ENCODE measurements at regions of chr6 and their contacts with region 1.

Region 1: DNA sequence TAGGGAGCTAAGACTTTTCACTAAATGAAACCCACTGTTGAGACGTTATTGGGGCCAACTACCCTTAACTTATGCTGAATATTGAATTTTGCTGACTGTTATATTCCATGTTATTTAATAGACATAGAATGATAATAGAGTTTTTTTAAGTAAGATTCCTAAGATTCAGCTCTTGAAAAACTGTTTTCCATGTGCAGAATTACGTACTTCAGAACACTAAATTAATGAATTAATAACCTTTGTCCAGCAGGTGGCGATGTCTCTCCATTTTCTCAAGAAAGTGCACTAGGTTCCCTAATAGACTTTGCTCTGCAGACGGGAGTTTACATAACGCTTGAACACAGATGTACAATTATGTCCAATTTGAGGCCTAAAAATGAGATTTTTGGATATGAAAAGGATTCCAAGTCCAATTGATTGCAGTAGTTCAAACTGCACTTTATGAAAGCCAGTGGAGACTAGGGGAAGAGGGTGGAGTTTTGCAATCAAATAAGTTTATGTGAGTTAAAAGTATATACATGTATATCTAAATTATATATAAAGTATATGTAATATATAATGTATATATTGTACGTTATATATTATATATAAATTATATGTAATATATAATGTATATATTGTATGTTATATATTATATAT is 282.1 kb downstream of the UST start:
- DNase-seq: peak; percentile 55
- H3K4me3 Mint-ChIP-seq: no peak overlapping the region
- H3K27ac Mint-ChIP-seq: peak overlapping the region; percentile 75
- H3K4me1 Mint-ChIP-seq: peaks cover 44% of the 10 kb centered on the region
- H3K27me3 Mint-ChIP-seq: no peaks in the 10 kb centered on the region

Region 2: DNA sequence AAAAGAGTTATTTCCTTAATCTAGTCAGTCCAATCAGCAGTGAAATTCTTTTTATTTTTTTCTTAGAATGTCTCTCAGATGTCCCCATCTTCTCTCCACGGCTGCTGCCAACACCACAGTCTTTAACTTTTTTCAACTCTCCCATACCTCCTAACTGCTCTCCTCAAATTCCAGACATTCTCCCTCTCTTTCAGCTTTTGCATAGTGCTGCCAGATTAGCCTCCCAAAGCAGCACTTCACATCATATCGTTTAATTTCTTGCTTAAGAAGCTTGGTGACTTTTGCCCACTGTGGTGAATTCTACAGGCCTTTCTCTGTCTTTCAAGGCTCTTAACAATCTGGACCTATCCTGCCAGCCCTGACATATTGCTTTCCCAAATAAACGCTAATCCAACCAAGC is 48.7 kb before region 1 on chr6:
- intact Hi-C with region 1: no loop called
- DNase-seq: no peak
- H3K4me3 Mint-ChIP-seq: no peak overlapping the region
- H3K27ac Mint-ChIP-seq: no peak overlapping the region
- H3K4me1 Mint-ChIP-seq: no peaks in the 10 kb centered on the region
- H3K27me3 Mint-ChIP-seq: peaks cover 28% of the 10 kb centered on the region

Region 3: DNA sequence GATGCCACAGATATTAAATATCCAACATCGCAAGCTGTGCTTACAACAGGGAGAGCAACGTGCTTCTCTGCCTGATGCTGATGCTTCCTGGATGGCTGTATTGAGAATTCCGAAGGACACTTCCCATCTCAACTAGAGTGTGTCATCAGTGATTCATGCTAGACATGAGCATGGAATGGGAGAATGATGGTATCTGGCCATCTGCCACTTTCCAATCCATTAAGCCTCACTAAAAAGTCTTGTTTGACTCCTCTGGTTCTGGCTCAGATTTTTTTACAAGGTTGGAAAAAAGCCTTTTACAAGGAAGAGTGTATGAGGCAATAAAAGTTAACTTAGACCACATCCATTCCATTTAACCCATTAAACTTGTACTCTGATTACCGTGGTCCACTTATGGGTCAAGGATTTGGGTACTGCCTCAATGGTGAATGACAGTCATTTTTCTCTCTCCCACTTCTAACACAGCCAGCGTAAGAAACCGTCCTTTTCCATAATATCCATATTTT is 16.8 kb before region 1 on chr6:
- intact Hi-C with region 1: no loop called
- DNase-seq: no peak
- H3K4me3 Mint-ChIP-seq: no peak overlapping the region
- H3K27ac Mint-ChIP-seq: no peak overlapping the region
- H3K4me1 Mint-ChIP-seq: peaks cover 2% of the 10 kb centered on the region
- H3K27me3 Mint-ChIP-seq: peaks cover 18% of the 10 kb centered on the region

Region 4: DNA sequence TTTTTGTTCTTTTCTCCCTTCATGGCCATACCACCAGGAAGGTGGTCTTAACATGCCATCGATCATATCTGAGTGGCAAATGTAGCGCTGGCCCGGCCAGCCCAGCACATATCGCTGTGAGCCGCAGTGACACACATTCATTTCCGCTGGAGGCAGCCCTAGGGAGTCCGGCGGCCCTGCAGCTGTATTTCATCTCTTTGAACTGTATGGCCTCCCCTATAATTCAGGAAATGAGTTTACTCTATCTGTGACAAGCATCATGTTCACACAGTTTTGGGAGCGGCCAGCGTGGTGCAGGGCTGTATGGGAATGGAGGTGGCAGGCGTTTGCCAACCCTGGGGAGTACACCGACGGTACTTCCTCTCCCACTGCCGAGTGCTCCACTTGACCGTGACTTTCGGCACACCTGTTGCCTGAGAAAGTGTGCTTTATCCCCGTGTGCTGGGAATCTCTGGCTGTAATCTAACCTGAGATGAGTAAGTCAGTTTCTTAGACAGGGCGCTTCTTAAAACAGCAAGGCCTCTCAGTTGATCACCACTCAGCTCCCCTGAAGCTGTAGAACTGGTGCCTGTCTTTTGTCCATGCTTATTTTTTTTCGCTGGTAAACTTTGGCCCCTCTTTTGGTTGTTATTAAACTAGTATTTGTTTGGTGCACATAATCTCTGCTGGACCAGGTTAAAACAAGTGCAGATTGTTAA is 31.6 kb after region 1 on chr6:
- intact Hi-C with region 1: loop called (anchors 1 kb)
- DNase-seq: peak; percentile 63
- H3K4me3 Mint-ChIP-seq: peak overlapping the region; percentile 69
- H3K27ac Mint-ChIP-seq: peak overlapping the region; percentile 88
- H3K4me1 Mint-ChIP-seq: peaks cover 64% of the 10 kb centered on the region
- H3K27me3 Mint-ChIP-seq: no peaks in the 10 kb centered on the region

Region 5: GRCh38 chr6:149082286-149082707 is 53.4 kb after region 1 on chr6:
- intact Hi-C with region 1: loop called (anchors 1 kb)
- DNase-seq: peak; percentile 79
- H3K4me3 Mint-ChIP-seq: no peak overlapping the region
- H3K27ac Mint-ChIP-seq: peak overlapping the region; percentile 77
- H3K4me1 Mint-ChIP-seq: peaks cover 79% of the 10 kb centered on the region
- H3K27me3 Mint-ChIP-seq: no peaks in the 10 kb centered on the region

Region 6: GRCh38 chr6:149211046-149211571 is 182.2 kb after region 1 on chr6:
- intact Hi-C with region 1: loop called (anchors 1 kb)
- DNase-seq: no peak
- H3K4me3 Mint-ChIP-seq: peak overlapping the region; percentile 45
- H3K27ac Mint-ChIP-seq: no peak overlapping the region
- H3K4me1 Mint-ChIP-seq: peaks cover 10% of the 10 kb centered on the region
- H3K27me3 Mint-ChIP-seq: no peaks in the 10 kb centered on the region

Region 7: GRCh38 chr6:149335924-149336608 is 307.2 kb after region 1 on chr6:
- intact Hi-C with region 1: loop called (anchors 5 kb)
- DNase-seq: no peak
- H3K4me3 Mint-ChIP-seq: peak overlapping the region; percentile 45
- H3K27ac Mint-ChIP-seq: peak overlapping the region; percentile 88
- H3K4me1 Mint-ChIP-seq: peaks cover 80% of the 10 kb centered on the region
- H3K27me3 Mint-ChIP-seq: no peaks in the 10 kb centered on the region

Region 8: GRCh38 chr6:149508485-149508884 is 479.6 kb after region 1 on chr6:
- intact Hi-C with region 1: loop called (anchors 2 kb)
- DNase-seq: no peak
- H3K4me3 Mint-ChIP-seq: no peak overlapping the region
- H3K27ac Mint-ChIP-seq: peak overlapping the region; percentile 59
- H3K4me1 Mint-ChIP-seq: peaks cover 27% of the 10 kb centered on the region
- H3K27me3 Mint-ChIP-seq: no peaks in the 10 kb centered on the region